Endothelial cell of umbilical vein (primary cell): ENCODE measurements at regions of chr6 and their contacts with region 1.

Region 1: GRCh38 chr6:154410619-154411072 is 54.0 kb upstream of the IPCEF1 start:
- DNase-seq: peak; percentile 97
- H3K4me3 ChIP-seq: peak overlapping the region in 1 of 3 experiments; percentile 19
- H3K27ac ChIP-seq: peak overlapping the region; percentile 99
- H3K4me1 ChIP-seq: peaks cover 25% of the 10 kb centered on the region
- H3K27me3 ChIP-seq: no peaks in the 10 kb centered on the region
- CTCF ChIP-seq: no peak
- POLR2A ChIP-seq: no peak

Region 2: DNA sequence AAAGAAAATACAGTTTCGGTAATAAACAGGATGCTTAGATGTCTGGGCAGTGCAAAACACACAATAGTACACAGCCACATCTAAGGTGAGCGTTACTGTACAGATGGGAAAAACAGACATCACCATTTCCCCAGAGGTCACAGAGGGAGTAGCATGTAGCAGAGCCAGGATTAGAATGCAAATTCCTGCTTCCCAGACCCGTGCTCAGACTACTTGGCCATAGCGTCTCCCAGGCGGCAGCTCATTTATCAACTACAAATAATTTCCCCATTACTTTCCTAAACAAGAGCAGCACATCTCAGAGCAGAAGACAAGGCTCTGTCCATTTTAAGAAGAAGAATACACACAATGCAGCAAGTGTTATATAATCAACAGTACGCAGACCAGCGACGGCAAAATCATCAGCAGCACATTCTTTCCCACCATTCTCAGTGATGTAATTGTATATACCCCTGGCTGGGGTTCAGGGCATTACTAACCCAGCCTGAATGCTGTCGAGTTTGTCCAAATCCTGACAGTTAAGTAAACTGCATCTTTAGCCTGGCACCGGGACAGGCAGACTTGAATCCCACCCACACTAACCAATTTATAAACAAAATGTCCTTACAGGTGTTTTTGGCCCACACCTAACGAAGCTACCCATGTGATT is 37.9 kb after region 1 on chr6:
- CTCF ChIA-PET with region 1: no interaction called
- POLR2A ChIA-PET with region 1: no interaction called
- dilution Hi-C with region 1: no loop called
- intact Hi-C with region 1: loop called (anchors 1 kb)
- DNase-seq: peak; percentile 77
- H3K4me3 ChIP-seq: no peak overlapping the region
- H3K27ac ChIP-seq: no peak overlapping the region
- H3K4me1 ChIP-seq: peaks cover 19% of the 10 kb centered on the region
- H3K27me3 ChIP-seq: no peaks in the 10 kb centered on the region
- CTCF ChIP-seq: peak in 1 of 2 donors; percentile 29
- POLR2A ChIP-seq: no peak

Region 3: DNA sequence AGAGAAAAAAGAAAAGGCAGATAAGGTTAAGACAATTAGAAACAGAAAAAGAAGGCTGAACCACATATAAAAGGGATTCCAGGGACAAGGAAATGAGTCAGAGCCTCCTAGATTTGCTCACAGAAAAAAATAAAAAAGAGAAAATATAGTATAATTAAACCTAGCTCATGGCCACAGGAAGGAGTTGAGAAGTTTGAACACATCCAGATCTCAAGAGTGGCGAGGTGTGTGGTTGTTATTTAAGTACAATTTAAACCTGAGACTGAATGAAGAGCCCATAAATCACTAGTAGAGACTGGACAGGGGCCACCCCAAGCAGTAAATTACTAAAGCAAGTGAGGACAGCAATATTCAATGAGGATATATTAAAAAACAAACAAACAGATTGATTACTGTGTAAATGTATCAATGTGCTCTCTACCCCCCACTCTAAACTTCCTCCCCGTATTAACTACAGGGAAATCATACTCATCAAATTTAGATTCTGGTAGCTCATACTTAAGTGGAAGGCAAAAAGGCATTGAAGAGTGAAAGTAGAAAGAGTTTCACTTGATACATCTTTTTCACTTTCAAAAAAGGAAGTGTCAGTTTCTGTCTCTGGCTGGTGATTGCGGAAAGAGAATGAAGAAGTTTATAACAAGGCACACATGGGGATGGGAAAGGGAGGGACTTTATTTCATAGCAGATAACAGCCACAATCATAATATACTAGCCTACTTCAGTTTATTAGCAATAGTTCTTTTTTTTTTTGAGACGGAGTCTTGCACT is 273.3 kb after region 1 on chr6:
- CTCF ChIA-PET with region 1: no interaction called
- POLR2A ChIA-PET with region 1: no interaction called
- dilution Hi-C with region 1: no loop called
- intact Hi-C with region 1: no loop called
- DNase-seq: peak; percentile 78
- H3K4me3 ChIP-seq: peak overlapping the region in 1 of 3 experiments; percentile 10
- H3K27ac ChIP-seq: peak overlapping the region; percentile 61
- H3K4me1 ChIP-seq: peaks cover 13% of the 10 kb centered on the region
- H3K27me3 ChIP-seq: no peaks in the 10 kb centered on the region
- CTCF ChIP-seq: no peak
- POLR2A ChIP-seq: no peak

Region 4: GRCh38 chr6:154882107-154882506 is 471.5 kb after region 1 on chr6:
- CTCF ChIA-PET with region 1: no interaction called
- POLR2A ChIA-PET with region 1: no interaction called
- dilution Hi-C with region 1: no loop called
- intact Hi-C with region 1: no loop called
- DNase-seq: no peak
- H3K4me3 ChIP-seq: no peak overlapping the region
- H3K27ac ChIP-seq: no peak overlapping the region
- H3K4me1 ChIP-seq: no peaks in the 10 kb centered on the region
- H3K27me3 ChIP-seq: no peaks in the 10 kb centered on the region
- CTCF ChIP-seq: no peak
- POLR2A ChIP-seq: no peak